Naive thymus-derived CD4-positive, alpha-beta T cell (primary cell): ENCODE measurements at regions of chr1 and their contacts with region 1.

Region 1: GRCh38 chr1:52056163-52056936 is at the start of gene BTF3L4:
- DNase-seq: peak; percentile 74 to 94 (median 90)
- ATAC-seq: peak; percentile 97
- H3K4me3 ChIP-seq: peak within 1 kb of the TSS; percentile 92
- H3K4me3 Mint-ChIP-seq: peak within 1 kb of the TSS; percentile 93 to 100 (median 98)
- H3K27ac ChIP-seq: peak within 1 kb of the TSS; percentile 87
- H3K27ac Mint-ChIP-seq: peak within 1 kb of the TSS; percentile 91 to 99 (median 96)
- H3K4me1 ChIP-seq: peaks cover 19 to 24% of the 10 kb centered on the region in 2 donors
- H3K4me1 Mint-ChIP-seq: peaks cover 39 to 79% (median 65%) of the 10 kb centered on the region in 7 donors
- H3K27me3 ChIP-seq: no peaks in the 10 kb centered on the region
- H3K27me3 Mint-ChIP-seq: no peaks in the 10 kb centered on the region
- total RNA-seq, gene BTF3L4: 30.4 to 41.2 (median 35.8) TPM

Region 2: DNA sequence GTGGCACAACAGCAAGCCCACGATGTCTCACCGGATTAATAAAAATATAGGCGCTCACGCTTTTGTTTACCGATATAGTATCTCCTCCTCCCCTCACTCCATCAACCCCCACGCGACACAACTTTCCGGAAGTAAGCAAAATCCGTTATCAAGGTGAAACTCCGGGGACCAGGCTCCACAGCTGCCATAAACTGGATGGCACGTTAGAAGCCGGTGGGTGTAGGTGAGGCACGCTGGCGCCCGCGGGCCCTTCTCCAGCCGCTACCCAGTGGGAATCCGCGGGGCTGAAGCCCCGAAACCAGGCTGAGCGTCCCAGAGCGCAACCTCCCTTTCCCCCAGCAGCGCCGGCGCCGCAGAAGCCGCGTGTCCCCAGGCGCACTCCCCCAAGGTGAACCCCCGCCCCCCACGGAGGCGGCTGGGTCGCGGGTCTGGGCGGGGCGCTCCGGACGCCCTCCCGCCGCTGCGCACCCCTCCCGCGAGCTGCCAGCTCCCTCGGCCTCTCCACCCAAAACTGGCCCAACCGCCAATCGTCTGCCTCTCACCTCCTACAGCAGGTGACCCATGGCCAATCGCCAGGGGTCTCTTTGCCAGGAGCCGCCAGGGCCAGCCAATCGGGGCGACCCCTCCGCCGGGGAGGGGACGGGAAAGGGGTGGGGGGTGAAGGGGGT is 327.1 kb before region 1 on chr1:
- CTCF ChIA-PET with region 1: no interaction called
- POLR2A ChIA-PET with region 1: no interaction called
- intact Hi-C with region 1: loop called in 1 of 2 experiments (anchors 1 kb)
- DNase-seq: peak; percentile 73 to 95 (median 88)
- ATAC-seq: peak; percentile 96
- H3K4me3 ChIP-seq: peak overlapping the region; percentile 87
- H3K4me3 Mint-ChIP-seq: peak overlapping the region; percentile 88 to 94 (median 92)
- H3K27ac ChIP-seq: peak overlapping the region; percentile 78
- H3K27ac Mint-ChIP-seq: peak overlapping the region; percentile 77 to 93 (median 89)
- H3K4me1 ChIP-seq: peaks cover 11 to 19% of the 10 kb centered on the region in 2 donors
- H3K4me1 Mint-ChIP-seq: peaks cover 17 to 56% (median 48%) of the 10 kb centered on the region in 7 donors
- H3K27me3 ChIP-seq: no peaks in the 10 kb centered on the region
- H3K27me3 Mint-ChIP-seq: no peaks in the 10 kb centered on the region

Region 3: DNA sequence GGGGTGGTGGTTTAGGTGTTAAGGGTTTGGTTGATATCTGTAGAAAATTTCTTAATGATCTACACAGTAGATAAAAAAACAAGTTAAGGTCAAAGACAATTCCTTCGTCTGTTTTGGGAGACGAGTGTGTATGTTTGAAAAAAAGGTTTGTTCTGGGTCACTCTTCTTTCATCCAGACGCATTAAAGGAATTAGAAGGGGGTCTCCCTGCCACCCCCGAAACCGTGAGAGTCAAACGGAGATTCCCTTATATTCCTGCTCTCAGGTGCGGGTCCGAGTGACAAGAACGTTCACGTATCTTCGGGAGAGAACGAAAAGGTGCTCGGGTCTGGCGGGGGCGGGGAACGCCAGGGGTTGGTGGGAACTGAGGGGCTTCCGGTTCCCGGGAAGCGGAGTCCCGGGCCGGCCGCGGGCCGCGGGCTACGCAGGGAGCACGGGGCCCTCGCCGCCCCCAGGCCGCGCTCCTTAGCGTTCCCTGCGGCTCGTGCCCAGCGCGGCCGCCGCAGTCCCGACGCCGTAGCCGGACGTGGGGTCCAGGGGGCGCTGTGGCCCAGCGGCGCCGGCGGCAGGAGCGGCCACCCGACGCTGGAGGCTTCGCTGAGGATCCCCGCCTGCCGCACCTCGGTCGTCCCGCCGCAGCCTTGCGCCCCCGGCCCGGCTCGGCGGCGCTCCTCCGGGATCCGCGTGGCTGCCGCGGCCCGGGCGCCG is 85.3 kb after region 1 on chr1 and contains the start of gene ZFYVE9:
- CTCF ChIA-PET with region 1: no interaction called
- POLR2A ChIA-PET with region 1: interaction called, 4 read pairs
- intact Hi-C with region 1: loop called in 1 of 2 experiments (anchors 1 kb)
- DNase-seq: peak; percentile 52 to 80 (median 73)
- ATAC-seq: peak; percentile 93
- H3K4me3 ChIP-seq: peak within 1 kb of the TSS; percentile 65
- H3K4me3 Mint-ChIP-seq: peak within 1 kb of the TSS; percentile 79 to 96 (median 92)
- H3K27ac ChIP-seq: peak within 1 kb of the TSS; percentile 72
- H3K27ac Mint-ChIP-seq: peak within 1 kb of the TSS; percentile 64 to 95 (median 86)
- H3K4me1 ChIP-seq: peaks cover 11 to 24% of the 10 kb centered on the region in 2 donors
- H3K4me1 Mint-ChIP-seq: peaks cover 26 to 48% (median 43%) of the 10 kb centered on the region in 7 donors
- H3K27me3 ChIP-seq: no peaks in the 10 kb centered on the region
- H3K27me3 Mint-ChIP-seq: peaks cover 0 to 44% (median 0%) of the 10 kb centered on the region in 5 donors
- total RNA-seq, gene ZFYVE9: 1.8 to 13.9 (median 7.6) TPM

Region 4: GRCh38 chr1:52636721-52637695 is 580.7 kb after region 1 on chr1:
- CTCF ChIA-PET with region 1: no interaction called
- POLR2A ChIA-PET with region 1: no interaction called
- intact Hi-C with region 1: loop called (anchors 2 to 10 kb)
- DNase-seq: peak; percentile 39 to 88 (median 83)
- ATAC-seq: peak; percentile 79
- H3K4me3 ChIP-seq: peak overlapping the region; percentile 19
- H3K4me3 Mint-ChIP-seq: peak overlapping the region; percentile 78 to 94 (median 86)
- H3K27ac ChIP-seq: peak overlapping the region; percentile 95
- H3K27ac Mint-ChIP-seq: peak overlapping the region; percentile 96 to 100 (median 99)
- H3K4me1 ChIP-seq: peaks cover 63 to 82% of the 10 kb centered on the region in 2 donors
- H3K4me1 Mint-ChIP-seq: peaks cover 52 to 85% (median 79%) of the 10 kb centered on the region in 7 donors
- H3K27me3 ChIP-seq: no peaks in the 10 kb centered on the region
- H3K27me3 Mint-ChIP-seq: peaks cover 0 to 11% (median 0%) of the 10 kb centered on the region in 5 donors

Region 5: GRCh38 chr1:52683367-52683940 is 627.1 kb after region 1 on chr1:
- CTCF ChIA-PET with region 1: no interaction called
- POLR2A ChIA-PET with region 1: no interaction called
- intact Hi-C with region 1: no loop called
- DNase-seq: no peak
- ATAC-seq: no peak
- H3K4me3 ChIP-seq: no peak overlapping the region
- H3K4me3 Mint-ChIP-seq: no peak overlapping the region
- H3K27ac ChIP-seq: no peak overlapping the region
- H3K27ac Mint-ChIP-seq: peak overlapping the region in 6 of 9 donors; percentile 8 to 68 (median 26)
- H3K4me1 ChIP-seq: peaks cover 4 to 6% of the 10 kb centered on the region in 2 donors
- H3K4me1 Mint-ChIP-seq: peaks cover 6 to 28% (median 13%) of the 10 kb centered on the region in 7 donors
- H3K27me3 ChIP-seq: no peaks in the 10 kb centered on the region
- H3K27me3 Mint-ChIP-seq: no peaks in the 10 kb centered on the region

Region 6: DNA sequence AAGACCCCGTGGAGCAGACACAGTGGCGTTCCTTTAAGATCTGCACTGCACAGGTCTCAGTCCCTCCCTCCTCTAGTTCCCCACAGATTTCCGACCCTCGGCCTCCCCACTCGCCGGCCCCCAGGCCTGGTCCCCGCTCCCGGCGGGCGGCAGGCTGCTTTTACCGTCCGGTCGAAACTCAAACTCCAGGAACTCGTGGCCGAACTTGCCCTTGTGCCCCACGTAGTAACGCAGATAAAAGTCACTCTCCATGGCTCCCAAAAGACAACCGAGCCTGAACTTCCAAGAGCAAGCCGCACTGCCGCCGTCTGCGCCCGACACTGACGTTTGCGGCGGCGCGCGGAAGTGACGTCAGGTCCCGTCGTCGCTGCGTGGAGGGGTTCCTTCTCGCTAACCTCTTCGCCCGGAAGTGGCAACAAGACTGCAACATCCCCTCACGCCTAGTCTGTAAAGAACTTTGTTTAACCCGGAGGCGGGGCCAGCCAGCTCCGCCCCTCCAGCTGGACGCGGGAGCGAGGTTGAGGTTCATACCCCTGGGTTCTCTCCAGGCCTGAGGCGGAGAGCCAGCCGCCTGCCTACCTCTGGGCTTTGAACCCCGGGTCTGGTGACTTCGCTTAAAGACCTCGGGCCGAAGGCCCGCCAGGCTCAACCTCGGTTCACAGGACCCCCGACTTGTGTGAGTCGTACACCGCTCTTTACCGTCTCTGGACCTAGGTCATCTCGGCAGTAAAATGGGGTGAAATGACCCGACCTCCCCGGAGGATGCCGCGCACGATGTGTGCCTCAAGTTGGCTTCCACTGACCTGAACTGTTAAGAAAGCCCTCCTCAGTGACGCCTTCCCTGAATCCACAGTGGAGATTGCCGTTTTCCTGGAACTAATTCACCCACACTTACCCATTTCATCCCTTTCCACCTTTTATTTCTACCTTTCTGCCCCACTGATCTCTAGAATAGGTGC is 1182.1 kb after region 1 on chr1 and contains the start of gene MAGOH:
- CTCF ChIA-PET with region 1: no interaction called
- POLR2A ChIA-PET with region 1: no interaction called
- intact Hi-C with region 1: loop called in 1 of 2 experiments (anchors 5 kb)
- DNase-seq: peak; percentile 90 to 96 (median 95)
- ATAC-seq: peak; percentile 98
- H3K4me3 ChIP-seq: peak within 1 kb of the TSS; percentile 97
- H3K4me3 Mint-ChIP-seq: peak within 1 kb of the TSS; percentile 96 to 99 (median 98)
- H3K27ac ChIP-seq: peak within 1 kb of the TSS; percentile 94
- H3K27ac Mint-ChIP-seq: peak within 1 kb of the TSS; percentile 92 to 99 (median 98)
- H3K4me1 ChIP-seq: peaks cover 18 to 19% of the 10 kb centered on the region in 2 donors
- H3K4me1 Mint-ChIP-seq: peaks cover 18 to 47% (median 32%) of the 10 kb centered on the region in 7 donors
- H3K27me3 ChIP-seq: no peaks in the 10 kb centered on the region
- H3K27me3 Mint-ChIP-seq: peaks cover 0 to 2% (median 0%) of the 10 kb centered on the region in 5 donors
- total RNA-seq, gene MAGOH: 37.7 to 76.7 (median 52.3) TPM

Region 7: DNA sequence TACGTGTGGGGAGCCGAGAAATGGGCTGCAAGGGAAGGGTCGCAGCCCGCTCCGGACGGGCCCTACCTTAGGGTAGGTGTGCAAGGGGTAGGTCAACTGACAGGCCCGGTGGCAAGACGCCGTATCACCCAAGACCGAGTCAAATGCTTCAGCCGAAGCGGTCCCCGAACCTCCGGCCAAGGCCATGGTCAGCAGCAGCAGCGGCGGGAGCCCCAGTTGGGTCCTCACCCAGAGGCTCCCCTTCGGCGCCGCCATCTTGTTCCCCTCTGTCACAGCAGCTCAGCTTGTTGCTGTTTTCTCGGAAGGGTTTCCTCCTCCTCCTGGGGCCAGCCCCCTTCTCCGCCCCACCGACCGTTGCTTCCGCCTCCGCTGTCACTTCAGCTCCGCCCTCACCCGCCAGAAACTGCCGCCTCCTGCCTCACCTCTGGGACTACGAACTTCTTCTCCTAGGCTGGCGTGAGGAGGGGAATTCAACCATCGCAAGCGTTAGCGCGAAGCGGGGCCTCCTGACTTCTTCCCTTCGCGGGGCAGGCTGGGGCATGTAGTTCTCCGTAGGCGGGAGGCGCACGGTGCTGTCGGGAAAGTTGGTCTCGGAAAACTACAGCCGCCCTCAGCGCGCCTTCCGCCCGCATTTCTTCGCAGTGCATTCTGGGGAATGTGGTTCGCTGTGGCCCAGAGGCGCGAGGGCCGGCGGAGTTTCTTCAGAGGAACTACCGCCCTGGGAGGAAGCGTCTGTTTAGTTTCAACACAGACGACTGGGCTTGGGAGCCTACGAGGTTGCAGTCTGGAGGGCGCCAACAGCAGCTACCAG is 1996.8 kb after region 1 on chr1 and contains the starts of genes TCEANC2 and TMEM59:
- CTCF ChIA-PET with region 1: no interaction called
- POLR2A ChIA-PET with region 1: no interaction called
- intact Hi-C with region 1: loop called in 1 of 2 experiments (anchors 5 kb)
- DNase-seq: peak; percentile 84 to 99 (median 98)
- ATAC-seq: peak; percentile 94
- H3K4me3 ChIP-seq: peak within 1 kb of the TSS; percentile 94
- H3K4me3 Mint-ChIP-seq: no peak within 1 kb of the TSS
- H3K27ac ChIP-seq: peak within 1 kb of the TSS; percentile 92
- H3K27ac Mint-ChIP-seq: no peak within 1 kb of the TSS
- H3K4me1 ChIP-seq: peaks cover 23 to 34% of the 10 kb centered on the region in 2 donors
- H3K4me1 Mint-ChIP-seq: peaks cover 27 to 62% (median 52%) of the 10 kb centered on the region in 7 donors
- H3K27me3 ChIP-seq: no peaks in the 10 kb centered on the region
- H3K27me3 Mint-ChIP-seq: no peaks in the 10 kb centered on the region
- total RNA-seq, gene TCEANC2: 6.3 to 15.1 (median 12.2) TPM
- total RNA-seq, gene TMEM59: 127 to 197 (median 183) TPM